ENCODE measurements at regions of chr22 and their contacts with region 1.

Region 1: DNA sequence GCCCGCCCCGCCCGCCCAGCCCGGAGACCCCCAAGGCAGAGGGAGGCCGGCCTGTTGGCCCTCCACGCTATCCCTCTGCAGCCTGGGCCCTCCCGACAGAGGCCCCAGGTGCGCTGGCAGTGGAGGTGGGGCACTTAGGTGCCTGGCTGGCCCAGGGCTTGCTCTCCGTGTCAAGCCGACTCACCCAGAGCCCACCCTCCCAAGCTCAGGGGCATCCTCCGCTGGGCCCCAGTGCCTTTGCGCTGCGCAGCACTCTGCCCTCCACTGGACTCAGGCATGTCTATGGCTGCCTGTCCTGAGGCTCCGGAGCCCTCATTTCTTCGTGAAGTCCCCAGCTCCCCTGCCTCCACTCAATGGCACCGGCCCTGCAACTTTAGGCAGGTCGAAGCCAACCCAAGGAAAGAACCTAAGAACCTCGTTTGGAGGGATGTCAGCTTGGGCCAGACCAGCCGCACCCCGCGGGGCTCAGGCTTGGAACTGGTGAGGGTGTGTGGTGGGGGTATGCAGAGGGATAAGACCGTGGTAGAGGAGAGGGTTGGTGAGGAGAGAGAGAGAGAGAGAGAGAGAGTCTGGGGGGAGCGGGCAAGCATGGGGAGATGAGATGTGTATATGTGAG is 6.1 kb downstream of the SMIM45 start:
- DNase-seq: no peak
- ATAC-seq: peak; percentile 71
- H3K4me3 ChIP-seq: peak overlapping the region in 2 of 3 experiments; percentile 27 to 43; a peak in 2 of 6 replicates
- H3K27ac ChIP-seq: no peak overlapping the region
- H3K4me1 ChIP-seq: no peaks in the 10 kb centered on the region
- H3K27me3 ChIP-seq: no peaks in the 10 kb centered on the region; a peak in 1 of 5 replicates
- CTCF ChIP-seq: no peak
- EP300 ChIP-seq: no peak
- POLR2A ChIP-seq: no peak
- RAD21 ChIP-seq: no peak

Region 2: DNA sequence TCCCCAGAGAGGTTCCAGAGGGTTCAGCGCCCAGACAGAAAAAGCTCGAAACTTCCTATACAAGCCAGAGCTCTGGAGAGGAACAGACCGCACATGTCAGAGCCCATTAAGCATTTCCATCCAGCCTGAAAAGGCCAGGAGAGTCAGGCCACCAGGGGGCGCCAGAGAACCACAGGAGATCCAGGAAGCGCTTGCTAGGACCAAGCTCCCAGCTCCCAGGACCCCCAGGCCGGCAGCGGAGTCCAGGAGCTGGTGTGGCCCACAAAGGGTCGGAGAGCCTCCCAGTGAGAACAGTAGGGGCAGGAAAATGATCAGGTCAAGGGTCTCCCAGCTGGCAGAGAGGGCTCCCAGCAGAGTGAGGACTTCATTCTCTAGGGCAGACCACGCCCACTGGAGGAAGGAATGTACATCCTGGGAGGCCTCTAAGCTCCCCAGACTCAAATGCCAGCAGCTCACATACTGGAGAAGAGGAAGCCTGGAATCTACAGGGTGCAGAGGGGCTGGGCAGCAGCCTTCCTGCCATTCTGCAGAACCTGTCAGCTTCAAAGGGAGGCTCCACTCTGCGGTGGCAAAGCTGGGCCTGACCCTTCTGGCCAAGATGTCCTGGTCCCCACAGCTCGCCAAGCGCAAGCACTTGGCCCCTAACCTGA is 260.8 kb before region 1 on chr22:
- CTCF ChIA-PET with region 1: interaction called, 4 read pairs
- POLR2A ChIA-PET with region 1: no interaction called
- in situ Hi-C with region 1: no loop called
- intact Hi-C with region 1: loop called (anchors 1 kb)
- DNase-seq: peak; percentile 81
- ATAC-seq: peak; percentile 91
- H3K4me3 ChIP-seq: peak overlapping the region; percentile 45 to 66 (median 53); a peak in 4 of 6 replicates
- H3K27ac ChIP-seq: no peak overlapping the region
- H3K4me1 ChIP-seq: peaks cover 16% of the 10 kb centered on the region
- H3K27me3 ChIP-seq: no peaks in the 10 kb centered on the region
- CTCF ChIP-seq: peak; percentile 96
- EP300 ChIP-seq: no peak
- POLR2A ChIP-seq: 0 out of 4 replicates have a peak, but pooled peaks of 1 of the 2 experiments have one; percentile 21
- RAD21 ChIP-seq: peak; percentile 93